ENCODE measurements at regions of chr1 and their contacts with region 1.

Region 1: GRCh38 chr1:213176341-213176740 is 125.3 kb downstream of the RPS6KC1 start:
- DNase-seq: no peak
- ATAC-seq: no peak
- H3K4me3 ChIP-seq: no peak overlapping the region
- H3K27ac ChIP-seq: no peak overlapping the region
- H3K4me1 ChIP-seq: no peaks in the 10 kb centered on the region
- H3K27me3 ChIP-seq: no peaks in the 10 kb centered on the region
- CTCF ChIP-seq: no peak

Region 2: GRCh38 chr1:213247038-213247437 is 70.7 kb after region 1 on chr1:
- CTCF ChIA-PET with region 1: interaction called, 11 read pairs
- POLR2A ChIA-PET with region 1: no interaction called
- in situ Hi-C with region 1: no loop called
- intact Hi-C with region 1: no loop called
- DNase-seq: no peak
- ATAC-seq: no peak
- H3K4me3 ChIP-seq: no peak overlapping the region
- H3K27ac ChIP-seq: no peak overlapping the region
- H3K4me1 ChIP-seq: no peaks in the 10 kb centered on the region
- H3K27me3 ChIP-seq: no peaks in the 10 kb centered on the region
- CTCF ChIP-seq: no peak

Measured in Panc1 (cell line).